ENCODE measurements at regions of chr6 and their contacts with region 1.

Region 1: GRCh38 chr6:33700391-33701050 is 11.0 kb downstream of the UQCC2 start:
- DNase-seq: peak; percentile 86
- ATAC-seq: peak; percentile 93
- H3K4me3 Mint-ChIP-seq: no peak overlapping the region
- H3K27ac Mint-ChIP-seq: no peak overlapping the region
- H3K4me1 Mint-ChIP-seq: peaks cover 24% of the 10 kb centered on the region
- H3K27me3 Mint-ChIP-seq: no peaks in the 10 kb centered on the region
- CTCF ChIP-seq: peak; percentile 66

Region 2: DNA sequence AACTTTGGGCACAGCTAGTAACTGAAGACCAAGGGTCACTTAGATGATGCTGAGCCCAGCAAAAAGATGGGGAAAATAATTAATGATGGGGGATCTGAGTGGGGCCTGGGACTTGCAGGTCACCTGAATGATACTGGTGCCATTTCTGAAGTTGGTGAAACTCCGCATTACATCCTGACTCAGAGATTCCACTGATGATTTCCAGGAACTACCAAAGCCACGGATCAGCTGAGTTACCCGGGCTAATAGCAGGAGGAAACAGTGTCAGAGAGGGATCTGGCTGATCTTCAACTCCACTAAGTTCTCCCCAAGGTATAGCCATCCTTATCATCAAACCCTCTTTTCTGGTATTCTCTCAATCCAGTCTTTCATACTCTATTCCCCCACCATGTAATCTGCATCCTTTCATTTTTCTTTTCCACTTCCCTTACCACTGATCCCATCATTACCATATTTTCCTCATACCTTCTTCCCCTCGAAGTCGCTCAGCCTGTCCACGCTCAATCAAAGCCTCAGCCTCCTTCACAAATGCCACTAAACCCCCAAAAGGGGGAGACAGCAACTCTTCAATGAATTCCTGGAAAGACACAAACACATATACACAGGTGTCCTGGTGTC is 449.0 kb before region 1 on chr6:
- CTCF ChIA-PET with region 1: no interaction called
- POLR2A ChIA-PET with region 1: no interaction called
- DNase-seq: no peak
- ATAC-seq: no peak
- H3K4me3 Mint-ChIP-seq: no peak overlapping the region; the same call in 1 of the 2 replicates
- H3K27ac Mint-ChIP-seq: no peak overlapping the region
- H3K4me1 Mint-ChIP-seq: peaks cover 18% of the 10 kb centered on the region
- H3K27me3 Mint-ChIP-seq: peaks cover 19% of the 10 kb centered on the region
- CTCF ChIP-seq: no peak

Region 3: GRCh38 chr6:33585403-33586107 is 115.0 kb before region 1 on chr6:
- CTCF ChIA-PET with region 1: interaction called, 38 read pairs
- POLR2A ChIA-PET with region 1: no interaction called
- DNase-seq: peak; percentile 92
- ATAC-seq: peak; percentile 71
- H3K4me3 Mint-ChIP-seq: no peak overlapping the region
- H3K27ac Mint-ChIP-seq: no peak overlapping the region
- H3K4me1 Mint-ChIP-seq: peaks cover 13% of the 10 kb centered on the region
- H3K27me3 Mint-ChIP-seq: no peaks in the 10 kb centered on the region
- CTCF ChIP-seq: peak; percentile 97

Region 4: DNA sequence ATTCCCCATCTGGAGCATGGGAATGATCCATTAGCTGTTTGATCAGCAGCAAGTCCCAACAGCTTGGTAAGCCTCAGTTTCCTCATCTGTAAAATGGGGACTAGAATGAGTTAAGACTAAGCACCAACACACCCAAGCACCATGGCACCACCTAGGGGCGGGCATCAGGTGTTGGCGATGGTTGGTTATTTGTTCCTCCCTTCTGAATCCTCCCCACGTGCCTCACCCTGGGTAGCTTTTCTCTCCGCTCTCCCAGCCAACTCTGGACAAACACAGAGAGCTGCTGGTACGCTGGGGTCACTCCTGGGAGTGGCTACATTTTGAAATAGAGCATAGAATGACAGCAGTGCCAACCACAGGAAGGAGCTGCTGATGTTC is 92.7 kb before region 1 on chr6:
- CTCF ChIA-PET with region 1: interaction called, 10 read pairs
- POLR2A ChIA-PET with region 1: no interaction called
- DNase-seq: no peak
- ATAC-seq: no peak
- H3K4me3 Mint-ChIP-seq: no peak overlapping the region
- H3K27ac Mint-ChIP-seq: no peak overlapping the region
- H3K4me1 Mint-ChIP-seq: peaks cover 45% of the 10 kb centered on the region
- H3K27me3 Mint-ChIP-seq: no peaks in the 10 kb centered on the region; the same call in 1 of the 2 replicates
- CTCF ChIP-seq: no peak

Region 5: DNA sequence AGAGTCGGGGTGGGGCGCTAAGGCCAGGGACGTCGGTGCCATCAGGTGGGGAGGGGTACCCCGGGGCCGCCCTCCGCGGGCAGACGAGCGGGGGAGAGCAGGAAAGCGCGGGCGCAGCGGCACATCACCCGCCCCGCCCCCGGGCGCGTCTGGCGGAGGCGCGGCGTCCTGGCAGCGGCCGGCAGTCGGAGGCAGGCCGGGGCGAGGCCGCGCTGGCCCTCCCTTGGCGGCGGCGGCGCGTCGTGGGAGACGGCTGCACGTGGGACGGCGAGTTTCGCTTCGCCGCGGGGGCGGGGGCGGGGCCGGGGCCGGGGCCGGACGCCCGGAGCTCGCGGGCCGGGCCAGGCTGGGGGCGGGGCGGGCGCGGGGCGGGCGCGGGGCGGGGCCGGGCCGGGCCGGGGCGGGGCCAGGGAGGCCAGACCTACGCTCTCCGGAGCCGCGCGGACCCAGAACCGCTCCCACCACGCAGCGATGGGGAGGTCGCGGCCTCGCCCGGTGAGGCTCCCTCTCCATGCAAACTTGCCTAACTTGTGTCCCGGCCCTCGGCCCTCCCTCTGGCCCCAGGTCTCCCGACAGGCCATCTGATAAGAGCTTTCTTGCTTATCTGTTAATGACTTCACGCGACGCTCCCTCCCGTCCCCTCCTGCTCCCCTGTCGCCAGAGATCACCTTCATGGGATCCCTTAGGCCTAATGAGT is 66.9 kb before region 1 on chr6:
- CTCF ChIA-PET with region 1: interaction called, 15 read pairs
- POLR2A ChIA-PET with region 1: no interaction called
- DNase-seq: peak; percentile 58
- ATAC-seq: peak; percentile 69
- H3K4me3 Mint-ChIP-seq: peak overlapping the region; percentile 83
- H3K27ac Mint-ChIP-seq: peak overlapping the region; percentile 47
- H3K4me1 Mint-ChIP-seq: peaks cover 59% of the 10 kb centered on the region
- H3K27me3 Mint-ChIP-seq: peaks cover 9% of the 10 kb centered on the region; the same call in 1 of the 2 replicates
- CTCF ChIP-seq: no peak

Region 6: DNA sequence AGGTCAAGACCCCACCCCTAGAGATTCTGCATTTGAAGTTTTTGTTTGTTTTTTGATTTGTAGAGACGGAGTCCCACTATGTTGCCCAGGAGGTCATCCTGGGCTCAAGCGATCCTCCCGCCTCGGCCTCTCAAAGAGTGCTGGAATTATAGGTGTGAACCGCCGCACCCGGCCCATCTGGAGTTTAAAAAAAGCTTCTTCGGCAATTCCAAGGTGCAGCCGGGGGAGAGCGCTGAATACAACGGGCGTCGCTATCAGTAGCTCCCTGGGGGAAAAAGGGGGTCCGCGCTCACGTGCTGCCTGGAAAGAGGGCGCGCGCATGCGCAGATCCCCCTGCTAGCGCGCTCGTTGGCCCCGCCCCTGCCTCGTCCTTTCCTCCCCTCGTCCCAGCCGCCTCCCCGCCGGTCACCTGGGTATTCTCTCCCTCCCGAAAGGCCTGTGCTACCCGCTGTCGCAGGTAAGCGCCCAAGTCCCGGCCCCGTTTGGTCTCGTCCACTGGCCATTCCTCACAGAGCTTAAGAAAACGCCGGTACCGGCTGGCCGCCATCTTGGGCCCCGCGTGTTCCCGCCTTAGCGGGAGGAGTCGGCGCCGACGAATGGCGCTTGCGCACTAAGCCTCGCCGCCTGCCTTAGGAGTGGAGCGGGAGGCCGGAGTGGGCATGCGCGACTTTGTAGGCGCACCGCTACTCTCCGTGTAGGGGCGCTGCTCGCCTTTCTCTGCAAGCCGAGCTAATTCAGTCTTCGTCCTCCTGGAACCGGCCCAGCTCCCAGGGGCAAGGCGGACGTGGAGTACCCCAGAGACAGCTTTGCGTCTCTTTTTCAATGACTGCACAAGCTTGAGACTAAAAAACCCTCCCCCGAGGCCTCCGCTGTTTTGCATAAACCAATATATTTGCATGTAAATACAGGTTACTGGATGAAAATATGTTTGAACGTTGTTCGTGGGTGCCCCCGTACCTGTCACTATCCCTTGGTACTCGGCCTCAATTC is 10.9 kb after region 1 on chr6 and contains the start of gene UQCC2:
- CTCF ChIA-PET with region 1: interaction called, 34 read pairs
- POLR2A ChIA-PET with region 1: interaction called, 3 read pairs
- DNase-seq: peak; percentile 96
- ATAC-seq: peak; percentile 96
- H3K4me3 Mint-ChIP-seq: peak within 1 kb of the TSS; percentile 82
- H3K27ac Mint-ChIP-seq: peak within 1 kb of the TSS; percentile 94
- H3K4me1 Mint-ChIP-seq: peaks cover 33% of the 10 kb centered on the region
- H3K27me3 Mint-ChIP-seq: no peaks in the 10 kb centered on the region; the same call in 1 of the 2 replicates
- CTCF ChIP-seq: no peak
- total RNA-seq, gene UQCC2: 65.8 to 105 TPM (median 95.3 TPM) in 3 replicates